Calu3 (cell line): ENCODE measurements at regions of chr2 and their contacts with region 1.

Region 1: GRCh38 chr2:181104512-181105115 is 124.2 kb downstream of the UBE2E3 start:
- DNase-seq: peak; percentile 39
- H3K4me3 Mint-ChIP-seq: no peak overlapping the region
- H3K27ac Mint-ChIP-seq: no peak overlapping the region
- H3K4me1 Mint-ChIP-seq: peaks cover 9% of the 10 kb centered on the region
- H3K27me3 Mint-ChIP-seq: no peaks in the 10 kb centered on the region
- CTCF ChIP-seq: peak; percentile 68

Region 2: DNA sequence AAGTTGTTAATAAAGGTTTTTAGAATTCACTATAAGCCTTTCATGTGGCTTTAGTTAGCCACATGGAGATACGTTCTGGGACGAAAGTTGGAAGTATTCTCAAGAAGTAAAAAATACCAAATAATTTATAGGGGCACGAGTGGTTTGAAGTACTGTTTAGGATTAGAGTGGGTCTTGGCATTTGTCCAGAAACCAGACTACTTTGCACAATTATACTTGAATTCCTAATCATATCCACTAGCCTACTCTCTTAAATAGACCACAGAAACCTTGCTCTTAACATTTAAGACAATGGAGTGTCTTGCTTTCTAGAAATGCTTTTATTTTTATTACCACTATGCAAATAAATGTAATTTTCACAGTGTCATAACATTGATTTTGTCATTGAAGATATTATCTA is 79.6 kb before region 1 on chr2:
- CTCF ChIA-PET with region 1: no interaction called
- intact Hi-C with region 1: no loop called
- DNase-seq: no peak
- H3K4me3 Mint-ChIP-seq: no peak overlapping the region
- H3K27ac Mint-ChIP-seq: no peak overlapping the region
- H3K4me1 Mint-ChIP-seq: peaks cover 10% of the 10 kb centered on the region
- H3K27me3 Mint-ChIP-seq: no peaks in the 10 kb centered on the region
- CTCF ChIP-seq: no peak

Region 3: DNA sequence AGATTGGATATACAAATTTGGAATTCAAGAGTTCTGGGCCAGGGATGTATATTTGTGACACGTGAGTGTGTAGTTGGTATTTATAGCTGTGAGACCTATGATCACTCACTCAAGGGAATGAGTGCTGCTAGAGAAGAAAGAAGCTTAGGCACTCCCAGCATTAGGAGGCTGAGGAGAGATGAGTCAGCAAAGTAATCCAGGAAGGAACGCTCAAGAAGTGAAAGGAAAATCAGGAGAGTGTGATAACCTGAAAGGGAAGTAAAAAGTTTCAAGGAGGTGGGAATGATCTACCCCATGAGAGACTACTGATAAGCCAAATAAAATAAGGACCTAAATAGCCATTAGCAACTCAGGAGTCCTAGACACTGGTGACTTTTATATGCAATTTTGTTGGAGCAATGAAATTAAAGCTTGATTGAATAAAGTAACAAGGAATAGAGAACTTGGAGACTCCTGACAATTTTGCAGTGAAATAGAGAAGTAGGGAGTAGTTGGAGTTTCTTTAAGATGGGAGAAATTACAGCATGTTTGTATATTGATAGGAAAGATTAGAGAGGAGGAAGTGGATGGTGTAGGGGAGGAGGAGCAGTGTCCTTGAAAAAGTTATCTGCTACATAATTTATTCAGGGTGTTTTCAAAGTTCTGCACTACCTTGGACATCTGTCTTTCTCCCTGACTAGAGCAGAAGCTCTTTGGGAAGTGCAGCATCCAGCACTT is 34.3 kb before region 1 on chr2:
- CTCF ChIA-PET with region 1: no interaction called
- intact Hi-C with region 1: no loop called
- DNase-seq: peak; percentile 3
- H3K4me3 Mint-ChIP-seq: no peak overlapping the region
- H3K27ac Mint-ChIP-seq: no peak overlapping the region
- H3K4me1 Mint-ChIP-seq: no peaks in the 10 kb centered on the region
- H3K27me3 Mint-ChIP-seq: no peaks in the 10 kb centered on the region
- CTCF ChIP-seq: no peak

Region 4: DNA sequence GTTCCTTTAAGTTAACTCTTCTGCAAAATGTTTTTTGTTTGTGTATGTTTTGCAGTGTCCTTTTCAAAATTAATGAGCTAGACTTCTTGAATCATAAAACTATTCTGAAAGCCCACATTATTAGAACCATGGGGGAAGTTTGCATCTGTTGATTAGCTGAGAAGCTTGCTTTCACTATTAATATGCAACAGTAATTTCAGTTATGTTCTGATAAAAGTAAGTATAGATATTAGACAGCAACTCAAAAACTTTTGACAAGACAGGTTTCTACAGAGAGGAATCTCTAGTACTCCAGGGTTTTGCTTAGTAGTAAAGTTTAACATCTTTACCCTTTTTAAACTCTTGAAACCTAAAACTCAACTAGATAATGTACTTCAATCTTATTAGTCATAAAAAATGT is 23.6 kb after region 1 on chr2:
- CTCF ChIA-PET with region 1: no interaction called
- intact Hi-C with region 1: no loop called
- DNase-seq: no peak
- H3K4me3 Mint-ChIP-seq: no peak overlapping the region
- H3K27ac Mint-ChIP-seq: no peak overlapping the region
- H3K4me1 Mint-ChIP-seq: no peaks in the 10 kb centered on the region
- H3K27me3 Mint-ChIP-seq: no peaks in the 10 kb centered on the region
- CTCF ChIP-seq: no peak

Region 5: GRCh38 chr2:181140414-181140813 is 35.8 kb after region 1 on chr2:
- CTCF ChIA-PET with region 1: no interaction called
- intact Hi-C with region 1: no loop called
- DNase-seq: no peak
- H3K4me3 Mint-ChIP-seq: no peak overlapping the region
- H3K27ac Mint-ChIP-seq: no peak overlapping the region
- H3K4me1 Mint-ChIP-seq: no peaks in the 10 kb centered on the region
- H3K27me3 Mint-ChIP-seq: no peaks in the 10 kb centered on the region
- CTCF ChIP-seq: no peak

Region 6: DNA sequence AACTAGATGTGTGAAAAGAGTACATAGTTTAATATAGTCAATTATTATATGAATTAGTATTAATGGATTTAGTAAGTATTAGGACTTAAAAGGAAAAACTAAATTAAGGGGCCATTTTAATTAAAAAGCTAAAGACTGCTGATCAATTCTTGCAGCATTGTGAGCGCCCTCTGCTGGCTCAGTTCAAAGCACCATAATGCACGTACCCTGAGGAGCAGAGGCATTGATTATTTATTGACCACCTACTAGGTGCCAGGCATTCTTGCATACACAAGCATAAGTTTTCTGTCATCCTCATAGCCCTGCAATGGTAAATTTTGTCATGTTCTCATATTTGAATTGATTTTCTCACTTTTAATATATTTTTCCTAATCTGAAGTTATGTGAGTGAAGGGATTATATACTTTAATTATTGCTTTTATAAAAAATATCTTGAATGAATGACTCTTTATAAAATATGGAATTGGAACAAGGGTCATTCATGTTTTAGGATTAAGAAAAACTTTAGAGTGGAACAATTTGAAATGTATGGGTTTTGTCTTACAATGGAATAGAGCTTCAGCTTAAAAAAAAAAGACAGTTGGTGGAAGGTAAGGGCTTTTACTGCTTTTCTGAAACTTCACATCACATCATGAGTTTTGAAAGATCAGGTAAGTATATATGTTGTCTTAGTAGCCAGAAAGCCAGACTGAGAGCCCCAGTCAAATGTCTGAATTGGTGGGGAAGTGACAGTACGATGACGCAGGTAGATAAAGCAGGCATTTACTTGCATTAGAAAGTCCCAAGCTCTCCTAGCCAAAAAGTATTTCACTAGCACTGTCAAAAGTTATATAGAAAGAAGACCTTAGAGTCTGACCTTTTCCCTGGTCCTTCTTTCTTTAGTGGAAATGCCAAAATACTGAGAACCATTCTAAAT is 362.3 kb after region 1 on chr2:
- CTCF ChIA-PET with region 1: interaction called, 6 read pairs
- intact Hi-C with region 1: loop called (anchors 1 kb)
- DNase-seq: peak; percentile 70
- H3K4me3 Mint-ChIP-seq: no peak overlapping the region
- H3K27ac Mint-ChIP-seq: no peak overlapping the region
- H3K4me1 Mint-ChIP-seq: no peaks in the 10 kb centered on the region
- H3K27me3 Mint-ChIP-seq: no peaks in the 10 kb centered on the region
- CTCF ChIP-seq: peak; percentile 89

Region 7: GRCh38 chr2:181566334-181567032 is 461.9 kb after region 1 on chr2:
- CTCF ChIA-PET with region 1: no interaction called
- intact Hi-C with region 1: loop called (anchors 5 kb)
- DNase-seq: no peak
- H3K4me3 Mint-ChIP-seq: no peak overlapping the region
- H3K27ac Mint-ChIP-seq: no peak overlapping the region
- H3K4me1 Mint-ChIP-seq: no peaks in the 10 kb centered on the region
- H3K27me3 Mint-ChIP-seq: no peaks in the 10 kb centered on the region
- CTCF ChIP-seq: no peak

Region 8: DNA sequence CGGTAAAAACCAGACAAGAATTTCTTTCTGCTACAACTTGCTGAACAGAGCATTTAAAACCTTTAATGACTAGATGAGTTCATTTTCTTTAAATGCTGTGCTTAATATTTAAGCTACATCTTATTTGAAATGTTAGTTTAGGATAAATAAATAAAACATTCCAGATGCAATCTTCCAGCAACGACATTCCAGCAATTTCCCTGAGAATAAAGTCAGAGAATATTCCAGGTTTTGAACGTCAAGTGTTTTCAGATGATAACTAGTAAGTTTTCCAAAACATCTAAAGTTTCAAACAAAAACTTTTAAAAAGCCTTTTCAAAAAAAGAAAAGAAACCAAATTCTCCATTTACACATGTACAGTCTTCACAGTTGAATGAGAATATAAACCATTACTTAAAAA is 985.9 kb after region 1 on chr2:
- CTCF ChIA-PET with region 1: no interaction called
- intact Hi-C with region 1: loop called (anchors 5 kb)
- DNase-seq: no peak
- H3K4me3 Mint-ChIP-seq: no peak overlapping the region
- H3K27ac Mint-ChIP-seq: no peak overlapping the region
- H3K4me1 Mint-ChIP-seq: no peaks in the 10 kb centered on the region
- H3K27me3 Mint-ChIP-seq: no peaks in the 10 kb centered on the region
- CTCF ChIP-seq: no peak

Region 9: GRCh38 chr2:182132605-182133004 is 1028.0 kb after region 1 on chr2:
- CTCF ChIA-PET with region 1: no interaction called
- intact Hi-C with region 1: loop called (anchors 1 kb)
- DNase-seq: no peak
- H3K4me3 Mint-ChIP-seq: no peak overlapping the region
- H3K27ac Mint-ChIP-seq: no peak overlapping the region
- H3K4me1 Mint-ChIP-seq: no peaks in the 10 kb centered on the region
- H3K27me3 Mint-ChIP-seq: no peaks in the 10 kb centered on the region
- CTCF ChIP-seq: peak; percentile 18